ENCODE measurements at regions of chr5 and their contacts with region 1.

Region 1: DNA sequence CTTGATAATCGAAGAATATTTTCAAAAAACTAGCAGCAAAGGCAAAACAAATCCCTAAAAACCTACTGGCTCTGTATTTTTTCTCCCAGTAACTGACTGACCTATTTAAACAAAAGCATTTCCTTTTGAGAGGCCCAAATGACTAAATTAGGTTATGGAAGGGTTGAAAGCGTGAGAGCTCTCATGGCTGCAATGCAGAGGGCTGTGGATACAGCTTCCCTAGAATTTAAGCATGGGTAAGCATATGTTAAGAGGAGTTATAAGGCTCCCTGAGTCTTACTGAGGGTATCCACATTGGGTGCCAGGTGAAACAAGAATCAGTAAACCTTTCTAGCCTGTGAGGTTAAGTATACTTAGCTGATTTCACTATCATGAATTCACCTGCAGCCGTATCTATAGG is 32.3 kb downstream of the SHISAL2B start:
- DNase-seq: no peak
- H3K4me3 ChIP-seq: no peak overlapping the region
- CTCF ChIP-seq: no peak
- POLR2A ChIP-seq: no peak

Region 2: GRCh38 chr5:64612344-64612961 is 110.1 kb before region 1 on chr5:
- intact Hi-C with region 1: no loop called
- DNase-seq: no peak
- H3K4me3 ChIP-seq: no peak overlapping the region
- CTCF ChIP-seq: no peak
- POLR2A ChIP-seq: no peak

Region 3: DNA sequence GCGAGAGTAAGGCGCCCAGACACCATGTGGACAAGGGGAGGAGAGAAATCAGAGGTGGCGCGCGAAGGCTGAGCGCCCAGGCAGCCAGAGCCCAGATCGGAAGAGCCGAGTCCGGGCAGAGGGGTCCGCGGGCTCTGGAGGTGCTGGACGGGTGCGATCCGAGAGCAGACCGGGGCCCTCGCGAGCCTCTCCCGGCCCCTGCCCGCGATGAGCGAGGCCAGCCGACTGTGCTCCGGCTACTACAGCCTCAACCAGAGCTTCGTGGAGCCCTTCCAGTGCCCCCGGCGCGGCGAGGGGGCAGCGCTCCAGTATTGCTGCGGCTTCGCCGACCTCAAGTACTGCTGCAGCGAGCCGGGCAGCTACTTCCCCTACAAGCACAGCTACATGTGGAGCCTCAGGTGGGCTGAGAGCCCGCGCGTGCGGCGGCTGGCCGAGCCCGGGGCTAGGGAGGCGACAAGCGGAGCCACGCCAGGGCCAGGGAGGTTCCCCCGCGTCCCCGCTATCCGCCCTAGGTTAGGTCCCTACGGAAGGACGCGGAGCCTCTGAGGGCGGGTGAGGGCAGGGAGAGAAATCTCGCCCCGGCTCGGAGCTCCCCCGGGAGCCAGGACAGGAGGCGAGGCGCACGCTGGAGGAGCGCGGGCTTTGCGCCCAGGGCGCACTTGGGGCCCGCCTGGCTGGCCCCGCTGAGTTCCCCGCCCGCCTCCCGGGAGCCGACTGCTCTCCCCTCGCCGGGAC is 32.0 kb before region 1 on chr5 and contains the start of gene SHISAL2B:
- intact Hi-C with region 1: no loop called
- DNase-seq: no peak
- H3K4me3 ChIP-seq: no peak within 1 kb of the TSS
- CTCF ChIP-seq: no peak
- POLR2A ChIP-seq: no peak
- total RNA-seq, gene SHISAL2B: not detected

Region 4: DNA sequence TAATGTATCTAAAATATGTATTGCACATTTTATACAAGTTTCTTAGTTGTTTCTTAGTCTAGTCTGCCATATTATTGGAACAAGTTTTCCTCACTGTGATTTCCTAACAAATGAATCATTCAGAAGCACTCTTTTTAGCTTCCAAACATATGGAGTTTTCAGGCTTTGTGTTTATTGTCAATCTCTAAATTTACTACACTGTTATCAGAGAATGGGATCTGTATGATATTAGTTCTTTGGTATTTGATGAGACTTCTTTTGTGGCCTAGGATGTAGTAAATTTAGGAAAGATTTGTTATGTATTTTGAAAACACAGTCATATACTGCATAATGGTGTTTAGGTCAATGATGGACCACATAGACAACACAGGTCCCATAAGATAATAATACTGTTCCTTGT is 20.2 kb after region 1 on chr5:
- intact Hi-C with region 1: loop called (anchors 1 kb)
- DNase-seq: no peak
- H3K4me3 ChIP-seq: no peak overlapping the region
- CTCF ChIP-seq: no peak
- POLR2A ChIP-seq: no peak

Region 5: DNA sequence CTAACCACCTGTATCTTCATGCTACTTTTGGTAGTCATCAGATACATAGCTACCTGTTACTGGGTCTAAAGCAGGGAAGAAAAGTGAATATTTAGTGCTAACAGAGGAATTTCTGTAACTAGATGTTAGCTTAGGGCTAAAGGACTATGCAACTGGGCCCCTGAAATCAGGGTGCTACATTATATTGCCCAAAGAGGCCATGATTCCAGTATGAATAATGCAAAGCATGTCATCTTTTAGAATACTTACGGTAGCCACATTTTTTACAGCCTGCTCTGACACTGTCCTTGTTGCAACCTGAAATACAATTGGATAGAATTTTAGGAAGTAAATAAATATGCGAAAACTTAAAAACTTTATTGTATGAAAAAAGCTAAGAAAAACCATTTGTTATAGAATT is 31.5 kb after region 1 on chr5:
- intact Hi-C with region 1: no loop called
- DNase-seq: no peak
- H3K4me3 ChIP-seq: no peak overlapping the region
- CTCF ChIP-seq: no peak
- POLR2A ChIP-seq: no peak

Measured in lower leg skin (tissue), 4 donors.